ENCODE measurements at regions of chr7 and their contacts with region 1.

Region 1: DNA sequence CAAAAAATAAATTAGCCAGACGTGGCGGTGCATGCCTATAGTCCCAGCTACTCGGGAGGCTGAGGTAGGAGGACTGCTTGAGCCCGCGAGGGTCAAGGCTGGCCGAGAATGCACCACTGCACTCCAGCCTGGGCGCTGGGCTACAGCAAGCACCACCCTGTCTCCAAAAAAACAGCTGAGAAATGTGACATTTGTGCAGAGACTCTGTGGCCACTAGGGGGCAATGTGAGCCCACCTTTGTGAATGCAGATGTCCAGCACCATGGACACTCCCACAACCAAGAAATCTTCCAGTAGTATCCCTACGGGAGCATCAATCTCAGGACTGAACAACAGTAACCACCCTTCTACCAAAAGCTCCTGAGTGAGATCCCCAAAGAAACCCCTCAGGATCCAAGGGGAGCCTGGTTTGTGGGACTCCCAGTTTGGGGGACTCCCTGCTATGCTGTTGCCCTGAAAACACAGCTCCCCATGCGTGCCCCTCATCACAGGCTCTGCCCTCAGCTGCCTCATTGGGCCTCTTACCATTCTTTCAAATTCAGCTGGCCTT is 6.2 kb upstream of the AHCYL2 start:
- DNase-seq: no peak
- H3K4me3 ChIP-seq: no peak overlapping the region
- CTCF ChIP-seq: peak; percentile 86

Region 2: GRCh38 chr7:129169171-129169671 is 49.4 kb before region 1 on chr7:
- CTCF ChIA-PET with region 1: interaction called, 297 read pairs
- POLR2A ChIA-PET with region 1: no interaction called
- DNase-seq: no peak
- H3K4me3 ChIP-seq: peak overlapping the region; percentile 55
- CTCF ChIP-seq: no peak

Region 3: DNA sequence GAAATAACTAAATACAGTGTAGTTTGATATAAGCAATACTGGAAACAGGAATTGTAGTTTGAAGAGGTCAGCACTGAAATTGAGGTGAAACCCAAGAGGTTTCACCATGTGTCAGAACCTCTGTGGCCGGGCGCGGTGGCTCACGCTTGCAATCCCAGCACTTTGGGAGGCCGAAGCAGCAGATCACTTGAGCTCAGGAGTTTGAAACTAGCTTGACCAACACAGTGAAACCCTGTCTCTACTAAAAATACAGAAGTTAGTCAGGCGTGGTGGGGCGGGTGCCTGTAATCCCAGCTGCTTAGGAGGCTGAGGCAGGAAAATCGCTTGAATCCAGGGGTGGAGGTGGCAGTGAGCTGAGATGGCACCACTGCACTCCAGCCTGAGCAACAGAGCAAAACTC is 20.0 kb after region 1 on chr7:
- CTCF ChIA-PET with region 1: interaction called, 42 read pairs
- POLR2A ChIA-PET with region 1: no interaction called
- DNase-seq: no peak
- H3K4me3 ChIP-seq: no peak overlapping the region
- CTCF ChIP-seq: no peak

Region 4: GRCh38 chr7:129298268-129298893 is 79.8 kb after region 1 on chr7:
- CTCF ChIA-PET with region 1: interaction called, 227 read pairs
- POLR2A ChIA-PET with region 1: no interaction called
- DNase-seq: no peak
- H3K4me3 ChIP-seq: no peak overlapping the region
- CTCF ChIP-seq: peak; percentile 56

Region 5: DNA sequence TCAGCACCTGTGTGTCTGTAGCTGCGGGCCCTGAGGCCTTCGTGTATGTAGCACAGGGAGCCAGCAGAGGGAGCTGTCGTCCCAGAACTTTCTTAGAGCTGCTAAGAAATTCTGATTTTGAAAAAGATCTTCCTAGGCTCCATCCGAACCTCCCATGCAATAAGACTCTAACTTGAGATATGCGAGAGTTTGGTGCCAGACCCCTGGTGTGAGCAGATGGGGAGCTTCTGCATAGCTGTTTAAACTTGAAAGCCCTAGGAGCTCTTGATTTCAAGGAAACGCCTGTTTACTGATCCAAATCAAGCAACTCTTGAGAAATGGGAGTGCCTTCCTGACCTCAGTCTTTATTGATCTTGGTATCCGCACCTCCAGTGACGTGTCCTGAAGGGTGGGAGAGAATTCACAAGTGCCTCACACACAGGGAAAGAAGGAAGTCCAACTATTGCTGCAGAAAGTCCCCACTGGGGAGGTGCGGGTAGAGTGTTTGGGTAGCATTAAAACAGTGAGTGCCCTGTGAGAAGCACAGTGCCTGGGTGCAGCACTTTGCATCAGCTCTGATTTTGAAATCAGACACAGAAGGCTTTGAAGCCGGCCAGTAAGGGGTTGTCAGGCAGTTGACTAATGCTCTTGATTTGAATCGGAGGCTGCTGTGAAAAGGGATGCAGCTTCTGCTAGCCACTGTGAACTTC is 149.3 kb after region 1 on chr7:
- CTCF ChIA-PET with region 1: interaction called, 34 read pairs
- POLR2A ChIA-PET with region 1: no interaction called
- DNase-seq: no peak
- H3K4me3 ChIP-seq: no peak overlapping the region
- CTCF ChIP-seq: peak; percentile 85

Region 6: GRCh38 chr7:129480674-129481365 is 262.2 kb after region 1 on chr7:
- CTCF ChIA-PET with region 1: interaction called, 16 read pairs
- POLR2A ChIA-PET with region 1: no interaction called
- DNase-seq: no peak
- H3K4me3 ChIP-seq: no peak overlapping the region
- CTCF ChIP-seq: no peak

Measured in AG04449 (cell line).